SK-N-SH (cell line): ENCODE measurements at regions of chr16 and their contacts with region 1.

Region 1: DNA sequence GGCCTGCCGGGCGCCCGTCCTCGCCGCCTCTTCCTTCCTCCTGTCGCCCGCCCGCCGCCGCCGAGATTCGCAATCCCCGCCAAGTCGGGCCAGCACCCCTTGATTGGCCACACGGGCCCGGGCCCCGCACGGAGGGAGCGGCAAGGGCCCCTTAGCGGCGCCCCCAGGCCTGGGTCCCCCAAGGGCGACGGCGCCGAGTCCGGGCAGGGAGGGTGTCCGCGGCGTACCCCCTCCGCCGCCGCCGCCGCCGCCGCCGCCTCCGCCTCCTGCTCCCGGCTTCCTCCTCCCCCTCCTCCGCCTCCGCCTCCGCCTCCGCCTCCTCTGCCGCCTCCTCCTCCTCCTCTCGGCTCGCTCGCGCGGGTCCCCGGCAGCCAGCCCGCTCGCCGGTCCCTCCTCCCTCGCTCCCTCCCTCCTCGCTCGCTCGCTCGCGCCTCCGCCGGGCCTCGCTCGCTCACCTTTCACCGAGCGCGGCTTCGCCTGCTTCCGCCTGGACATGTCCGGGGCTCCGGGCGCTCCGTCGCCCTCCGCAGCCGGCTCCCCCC is 561 bp downstream of the ZNF423 start:
- DNase-seq: peak; percentile 83
- H3K4me3 ChIP-seq: peak overlapping the region; percentile 61 to 68
- H3K27ac ChIP-seq: peak overlapping the region in 1 of 2 experiments; percentile 92; a peak in 2 of 4 replicates
- H3K4me1 ChIP-seq: peaks cover 13 to 46% of the 10 kb centered on the region in 2 experiments; a peak in 3 of 4 replicates
- H3K27me3 ChIP-seq: peaks cover 8% of the 10 kb centered on the region
- CTCF ChIP-seq: no peak
- EP300 ChIP-seq: no peak
- RAD21 ChIP-seq: no peak

Region 2: GRCh38 chr16:49407873-49408550 is 447.3 kb before region 1 on chr16:
- CTCF ChIA-PET with region 1: interaction called, 20 read pairs
- POLR2A ChIA-PET with region 1: interaction called, 3 read pairs
- DNase-seq: peak; percentile 88
- H3K4me3 ChIP-seq: no peak overlapping the region
- H3K27ac ChIP-seq: no peak overlapping the region
- H3K4me1 ChIP-seq: peaks cover 0 to 3% of the 10 kb centered on the region in 2 experiments; a peak in 1 of 4 replicates
- H3K27me3 ChIP-seq: no peaks in the 10 kb centered on the region
- CTCF ChIP-seq: peak; percentile 76
- EP300 ChIP-seq: no peak
- RAD21 ChIP-seq: peak; percentile 99

Region 3: GRCh38 chr16:49608779-49609178 is 246.6 kb before region 1 on chr16:
- CTCF ChIA-PET with region 1: interaction called, 15 read pairs
- POLR2A ChIA-PET with region 1: no interaction called
- DNase-seq: peak; percentile 48
- H3K4me3 ChIP-seq: no peak overlapping the region
- H3K27ac ChIP-seq: peak overlapping the region in 1 of 2 experiments; percentile 20; a peak in 1 of 4 replicates
- H3K4me1 ChIP-seq: peaks cover 0 to 44% of the 10 kb centered on the region in 2 experiments; a peak in 2 of 4 replicates
- H3K27me3 ChIP-seq: no peaks in the 10 kb centered on the region
- CTCF ChIP-seq: peak; percentile 56
- EP300 ChIP-seq: no peak
- RAD21 ChIP-seq: peak; percentile 78

Region 4: DNA sequence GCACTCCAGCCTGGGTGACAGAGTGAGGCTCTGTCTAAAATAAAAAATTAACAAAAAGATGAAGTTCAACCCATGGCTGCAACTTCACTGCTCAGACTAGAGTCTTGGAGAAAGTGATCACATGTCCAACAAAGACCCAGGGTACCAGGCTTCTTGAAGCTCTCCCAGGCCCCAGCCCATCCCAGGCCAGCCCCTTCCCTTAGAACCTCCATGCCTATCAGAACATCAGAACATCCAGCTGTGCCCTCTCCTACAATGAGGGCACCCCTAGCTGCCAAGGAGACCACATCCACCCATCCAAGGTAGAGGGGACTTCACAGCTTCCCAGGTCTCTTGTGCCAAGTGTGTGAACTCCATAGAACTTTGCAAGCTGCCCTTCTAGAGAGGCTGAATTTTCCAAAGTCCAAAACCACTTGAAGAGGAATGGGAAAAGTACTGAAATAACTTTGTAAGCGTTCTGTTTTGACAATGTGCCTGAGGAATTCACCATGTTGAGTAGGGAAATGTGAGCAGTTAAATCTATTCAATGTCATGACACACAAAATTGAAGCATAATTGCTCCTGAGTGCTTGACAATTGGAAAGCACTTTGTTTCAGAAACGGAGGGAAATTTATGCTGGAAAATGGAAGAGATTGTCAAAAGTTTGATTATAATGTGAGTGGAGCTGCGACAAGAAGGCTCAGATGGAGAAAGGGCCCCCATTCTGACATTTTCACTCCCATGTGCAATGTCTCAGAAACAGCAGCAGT is 229.9 kb before region 1 on chr16:
- CTCF ChIA-PET with region 1: no interaction called
- POLR2A ChIA-PET with region 1: no interaction called
- DNase-seq: no peak
- H3K4me3 ChIP-seq: no peak overlapping the region
- H3K27ac ChIP-seq: no peak overlapping the region
- H3K4me1 ChIP-seq: peaks cover 12 to 27% of the 10 kb centered on the region in 2 experiments; a peak in 3 of 4 replicates
- H3K27me3 ChIP-seq: no peaks in the 10 kb centered on the region
- CTCF ChIP-seq: no peak
- EP300 ChIP-seq: no peak
- RAD21 ChIP-seq: no peak

Region 5: GRCh38 chr16:49740256-49740655 is 115.1 kb before region 1 on chr16:
- CTCF ChIA-PET with region 1: interaction called, 15 read pairs
- POLR2A ChIA-PET with region 1: interaction called, 3 read pairs
- DNase-seq: no peak
- H3K4me3 ChIP-seq: no peak overlapping the region
- H3K27ac ChIP-seq: no peak overlapping the region
- H3K4me1 ChIP-seq: peaks cover 0 to 51% of the 10 kb centered on the region in 2 experiments; a peak in 2 of 4 replicates
- H3K27me3 ChIP-seq: no peaks in the 10 kb centered on the region
- CTCF ChIP-seq: no peak
- EP300 ChIP-seq: no peak
- RAD21 ChIP-seq: no peak

Region 6: DNA sequence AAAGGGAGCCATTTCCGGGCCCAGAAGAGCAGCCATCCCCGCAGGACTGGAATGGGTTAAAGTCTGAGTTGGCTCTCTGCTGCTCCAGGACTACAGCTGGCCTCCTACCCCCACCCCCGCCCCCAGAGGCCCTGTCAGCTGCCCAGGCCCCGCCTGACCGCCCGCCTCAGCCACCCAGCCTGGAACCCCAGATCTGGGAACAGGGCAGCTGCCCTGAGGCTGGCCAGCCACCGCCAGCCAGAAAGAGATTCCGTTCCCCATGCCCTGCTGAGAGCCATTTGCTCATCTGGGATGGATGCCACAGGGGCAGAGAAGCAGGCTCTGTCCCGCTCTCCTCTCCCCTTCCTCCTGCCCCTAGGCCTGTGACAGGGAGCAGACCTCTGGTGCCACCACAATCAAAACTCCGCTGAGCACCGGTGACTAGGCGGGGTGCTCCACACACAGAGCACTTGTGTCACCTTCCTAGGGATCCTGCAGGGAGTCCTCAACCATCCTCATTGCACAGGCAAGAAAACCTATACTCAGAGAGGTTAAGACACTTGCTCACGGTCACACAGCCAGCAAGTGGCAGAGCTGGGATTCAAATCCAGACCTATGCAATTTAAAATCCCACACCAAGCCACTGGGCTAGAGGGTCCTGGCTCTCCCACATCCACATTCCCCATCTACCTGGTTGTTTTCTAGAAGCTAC is 43.6 kb before region 1 on chr16:
- CTCF ChIA-PET with region 1: interaction called, 27 read pairs
- POLR2A ChIA-PET with region 1: interaction called, 4 read pairs
- DNase-seq: peak; percentile 96
- H3K4me3 ChIP-seq: no peak overlapping the region
- H3K27ac ChIP-seq: peak overlapping the region in 1 of 2 experiments; percentile 94; a peak in 2 of 4 replicates
- H3K4me1 ChIP-seq: peaks cover 0 to 55% of the 10 kb centered on the region in 2 experiments; a peak in 2 of 4 replicates
- H3K27me3 ChIP-seq: no peaks in the 10 kb centered on the region
- CTCF ChIP-seq: no peak
- EP300 ChIP-seq: peak in 1 of 2 experiments; percentile 85; a peak in 2 of 4 replicates
- RAD21 ChIP-seq: peak; percentile 40; the same call in 1 of the 2 replicates

Region 7: DNA sequence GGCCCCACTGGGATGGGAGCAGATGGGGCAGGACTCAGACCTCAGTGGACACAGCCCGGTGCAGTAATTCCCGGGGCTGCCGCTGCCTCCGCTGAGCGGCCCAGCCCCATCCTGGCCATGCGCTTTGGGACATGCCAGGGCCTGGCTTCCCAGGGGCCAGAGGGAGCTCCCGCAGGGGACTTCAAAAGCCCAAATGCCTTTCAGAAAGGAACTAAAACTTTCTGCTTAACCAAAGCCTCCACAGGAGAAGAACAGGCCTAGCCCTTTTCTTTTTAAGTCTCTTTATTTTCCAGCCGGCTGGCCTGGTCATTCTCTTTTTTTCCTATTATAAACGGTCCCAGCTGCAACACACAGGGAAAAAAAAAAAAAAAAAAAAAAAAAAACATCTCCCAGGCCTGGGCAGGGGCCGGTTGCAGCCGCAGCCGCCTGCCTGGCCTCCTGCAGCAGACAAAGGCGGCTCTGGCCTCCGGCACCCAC is 11.3 kb after region 1 on chr16:
- CTCF ChIA-PET with region 1: interaction called, 26 read pairs
- POLR2A ChIA-PET with region 1: interaction called, 4 read pairs
- DNase-seq: peak; percentile 90
- H3K4me3 ChIP-seq: no peak overlapping the region
- H3K27ac ChIP-seq: peak overlapping the region in 1 of 2 experiments; percentile 93; a peak in 2 of 4 replicates
- H3K4me1 ChIP-seq: peaks cover 0 to 18% of the 10 kb centered on the region in 2 experiments; a peak in 1 of 4 replicates
- H3K27me3 ChIP-seq: peaks cover 12% of the 10 kb centered on the region; the same call in 1 of the 2 replicates
- CTCF ChIP-seq: no peak
- EP300 ChIP-seq: no peak
- RAD21 ChIP-seq: peak; percentile 17; the same call in 1 of the 2 replicates

Region 8: GRCh38 chr16:49910541-49911071 is 55.3 kb after region 1 on chr16:
- CTCF ChIA-PET with region 1: interaction called, 10 read pairs
- POLR2A ChIA-PET with region 1: no interaction called
- DNase-seq: peak; percentile 67
- H3K4me3 ChIP-seq: no peak overlapping the region
- H3K27ac ChIP-seq: no peak overlapping the region
- H3K4me1 ChIP-seq: peaks cover 0 to 9% of the 10 kb centered on the region in 2 experiments; a peak in 1 of 4 replicates
- H3K27me3 ChIP-seq: no peaks in the 10 kb centered on the region; the same call in 1 of the 2 replicates
- CTCF ChIP-seq: no peak
- EP300 ChIP-seq: no peak
- RAD21 ChIP-seq: no peak

Region 9: DNA sequence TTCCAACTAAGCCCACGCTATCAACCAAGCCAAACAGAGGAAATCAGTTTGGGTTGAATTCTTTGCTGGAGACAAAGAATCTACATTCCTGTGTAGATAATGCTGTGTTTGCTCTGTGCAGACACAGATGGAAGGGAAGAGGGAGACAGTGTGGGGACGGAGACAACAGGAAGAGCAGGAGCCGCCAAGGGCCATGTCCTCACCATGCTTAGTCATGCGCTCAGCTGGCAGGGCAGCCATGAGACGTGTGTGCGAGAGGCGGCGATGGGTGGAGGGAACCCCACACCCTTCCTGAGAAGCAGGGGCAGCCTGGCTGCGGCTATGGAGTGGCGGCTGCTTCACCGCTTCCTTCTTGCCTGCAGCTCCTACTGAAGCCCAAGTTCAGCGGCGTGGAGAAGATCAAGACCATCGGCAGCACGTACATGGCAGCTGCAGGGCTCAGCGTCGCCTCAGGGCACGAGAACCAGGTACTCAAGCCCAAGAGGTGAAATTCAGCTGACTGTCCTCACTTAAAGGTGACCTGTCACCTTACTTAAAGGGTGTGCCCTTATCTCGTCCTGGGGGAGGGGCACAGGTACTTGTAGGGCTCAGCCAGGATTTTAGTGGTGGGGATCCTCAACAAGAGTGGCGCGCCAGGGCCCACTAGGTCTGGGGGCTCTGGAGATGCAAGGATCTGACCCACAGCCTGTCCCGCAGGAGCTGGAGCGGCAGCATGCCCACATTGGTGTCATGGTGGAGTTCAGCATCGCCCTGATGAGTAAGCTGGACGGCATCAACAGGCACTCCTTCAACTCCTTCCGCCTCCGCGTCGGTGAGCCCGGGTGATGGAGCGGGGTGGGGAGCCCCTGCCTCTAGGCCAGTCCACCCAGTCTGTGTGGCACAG is 458.5 kb after region 1 on chr16:
- CTCF ChIA-PET with region 1: no interaction called
- POLR2A ChIA-PET with region 1: no interaction called
- DNase-seq: no peak
- H3K4me3 ChIP-seq: no peak overlapping the region
- H3K27ac ChIP-seq: peak overlapping the region in 1 of 2 experiments; percentile 16; a peak in 1 of 4 replicates
- H3K4me1 ChIP-seq: peaks cover 0 to 52% of the 10 kb centered on the region in 2 experiments; a peak in 2 of 4 replicates
- H3K27me3 ChIP-seq: no peaks in the 10 kb centered on the region
- CTCF ChIP-seq: no peak
- EP300 ChIP-seq: no peak
- RAD21 ChIP-seq: no peak